Head of caudate nucleus (tissue), 42 donors: ENCODE measurements at regions of chr14 and their contacts with region 1.

Region 1: GRCh38 chr14:90399541-90400444 is 3.0 kb downstream of the CALM1 start:
- DNase-seq: peak; percentile 82 to 97 (median 94)

Region 2: GRCh38 chr14:90331497-90332435 is 68.0 kb before region 1 on chr14 and contains the start of gene NRDE2:
- intact Hi-C with region 1: loop called (anchors 5 kb)
- DNase-seq: peak; percentile 97 to 100 (median 99)

Region 3: GRCh38 chr14:90383075-90383730 is 16.6 kb before region 1 on chr14:
- intact Hi-C with region 1: loop called (anchors 1 kb)
- DNase-seq: peak; percentile 99 to 100 (median 100)

Region 4: DNA sequence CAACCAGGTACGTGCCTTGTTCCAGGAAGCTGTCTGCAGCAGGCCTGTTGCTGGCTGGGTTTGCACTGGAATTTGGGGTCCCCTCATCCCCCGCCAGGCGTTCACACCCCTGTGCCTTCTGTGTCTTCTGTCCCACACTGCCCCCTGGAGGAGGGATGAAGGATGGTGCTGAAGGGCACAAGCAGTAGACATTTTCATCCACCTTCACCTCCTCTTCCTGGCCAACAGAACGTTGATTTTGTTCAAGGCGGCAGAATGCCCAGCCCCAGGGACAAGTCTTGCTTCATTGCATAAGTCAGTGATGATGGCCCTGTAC is 119.1 kb after region 1 on chr14:
- intact Hi-C with region 1: loop called (anchors 10 kb)
- DNase-seq: peak in 19 of 42 donors; percentile 30 to 72 (median 57)

Region 5: DNA sequence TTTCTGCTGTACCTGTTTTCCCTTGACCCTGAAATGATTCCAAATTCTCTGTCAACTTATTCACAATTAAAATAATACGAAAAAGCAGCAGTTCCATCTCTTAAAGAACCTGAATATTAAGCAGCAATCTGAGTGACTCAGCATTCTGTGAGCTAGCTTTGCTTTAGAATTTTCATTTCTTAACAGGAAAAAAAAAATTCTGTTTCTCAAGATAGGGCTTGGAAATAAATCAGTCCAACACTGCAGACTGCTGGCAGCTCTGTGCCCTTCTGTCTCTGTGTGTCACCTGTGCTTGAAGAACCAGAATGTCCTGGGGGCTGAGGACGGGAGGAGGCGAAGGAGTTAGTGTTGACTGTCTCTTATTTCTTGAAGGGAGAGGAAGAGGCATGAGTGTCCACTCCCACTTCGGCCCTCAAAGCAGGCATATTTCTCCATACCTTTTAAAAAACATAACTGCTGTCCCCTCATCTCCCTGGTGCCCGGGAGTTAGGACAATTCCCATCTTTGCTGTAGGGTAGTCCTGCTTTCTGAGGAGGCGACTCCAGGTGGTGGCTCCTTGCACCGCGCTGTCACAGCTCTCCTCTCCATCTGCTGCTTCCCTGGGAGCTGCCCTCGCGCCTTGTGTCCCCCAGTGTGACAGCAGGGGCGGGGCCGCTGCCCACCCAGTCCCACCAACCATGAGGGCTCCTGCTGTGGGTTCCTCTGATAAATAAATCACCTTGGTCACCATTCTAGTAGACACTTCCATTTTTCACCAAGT is 200.1 kb after region 1 on chr14:
- intact Hi-C with region 1: loop called (anchors 5 kb)
- DNase-seq: peak in 32 of 42 donors; percentile 36 to 77 (median 59)

Region 6: GRCh38 chr14:90697577-90698206 is 297.9 kb after region 1 on chr14:
- intact Hi-C with region 1: loop called (anchors 5 kb)
- DNase-seq: peak; percentile 81 to 97 (median 91)

Region 7: GRCh38 chr14:90758028-90758889 is 358.5 kb after region 1 on chr14:
- intact Hi-C with region 1: loop called (anchors 5 kb)
- DNase-seq: peak; percentile 63 to 96 (median 91)

Region 8: GRCh38 chr14:90785471-90785870 is 385.7 kb after region 1 on chr14:
- intact Hi-C with region 1: no loop called
- DNase-seq: peak in 38 of 42 donors; percentile 26 to 92 (median 72)